CD4-positive, alpha-beta memory T cell (primary cell): ENCODE measurements at regions of chr5 and their contacts with region 1.

Region 1: DNA sequence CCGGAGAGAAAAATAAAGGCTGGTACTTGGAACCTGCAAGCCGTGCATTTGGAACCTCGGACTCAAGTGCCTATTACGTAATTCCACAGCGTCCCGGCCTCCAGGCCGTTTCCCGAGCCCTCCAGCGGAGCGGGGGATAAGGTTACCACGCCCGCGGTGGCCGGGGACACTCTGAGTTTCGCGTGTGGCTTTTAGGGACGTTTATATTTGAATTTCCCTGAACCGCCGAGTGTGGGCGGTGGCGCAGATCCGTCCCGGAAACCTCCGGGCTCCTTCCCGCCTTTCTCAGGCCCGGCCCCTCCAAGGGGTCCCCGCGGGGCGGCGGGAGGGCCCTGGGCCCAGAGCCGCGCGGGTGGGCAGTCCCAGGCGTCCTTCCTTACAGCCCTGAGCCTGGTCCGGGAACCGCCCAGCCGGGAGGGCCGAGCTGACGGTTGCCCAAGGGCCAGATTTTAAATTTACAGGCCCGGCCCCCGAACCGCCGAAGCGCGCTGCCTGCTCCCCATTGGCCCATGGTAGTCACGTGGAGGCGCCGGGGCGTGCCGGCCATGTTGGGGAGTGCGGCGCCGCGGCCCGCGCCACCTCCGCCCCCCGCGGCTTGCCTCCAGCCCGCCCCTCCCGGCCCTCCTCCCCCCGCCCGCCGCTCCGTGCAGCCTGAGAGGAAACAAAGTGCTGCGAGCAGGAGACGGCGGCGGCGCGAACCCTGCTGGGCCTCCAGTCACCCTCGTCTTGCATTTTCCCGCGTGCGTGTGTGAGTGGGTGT is at the start of gene LMNB1:
- DNase-seq: peak; percentile 92 to 98 (median 94)
- H3K4me3 ChIP-seq: peak within 1 kb of the TSS; percentile 78 to 94
- H3K4me3 Mint-ChIP-seq: peak within 1 kb of the TSS; percentile 88 to 98 (median 95)
- H3K27ac ChIP-seq: peak within 1 kb of the TSS; percentile 85
- H3K27ac Mint-ChIP-seq: peak within 1 kb of the TSS; percentile 86 to 99 (median 95)
- H3K4me1 ChIP-seq: peaks cover 37% of the 10 kb centered on the region
- H3K4me1 Mint-ChIP-seq: peaks cover 16 to 35% (median 25%) of the 10 kb centered on the region in 4 donors
- H3K27me3 ChIP-seq: no peaks in the 10 kb centered on the region
- H3K27me3 Mint-ChIP-seq: no peaks in the 10 kb centered on the region
- total RNA-seq, gene LMNB1: 28.2 to 32.3 TPM

Region 2: GRCh38 chr5:126422989-126423788 is 353.5 kb before region 1 on chr5 and contains the start of gene GRAMD2B:
- CTCF ChIA-PET with region 1: no interaction called
- POLR2A ChIA-PET with region 1: interaction called, 7 read pairs
- intact Hi-C with region 1: loop called (anchors 5 kb)
- DNase-seq: peak; percentile 70 to 82 (median 75)
- H3K4me3 ChIP-seq: peak within 1 kb of the TSS; percentile 70 to 79
- H3K4me3 Mint-ChIP-seq: peak within 1 kb of the TSS; percentile 90 to 95 (median 92)
- H3K27ac ChIP-seq: peak within 1 kb of the TSS; percentile 87
- H3K27ac Mint-ChIP-seq: peak within 1 kb of the TSS; percentile 87 to 95 (median 94)
- H3K4me1 ChIP-seq: peaks cover 22% of the 10 kb centered on the region
- H3K4me1 Mint-ChIP-seq: peaks cover 20 to 40% (median 27%) of the 10 kb centered on the region in 4 donors
- H3K27me3 ChIP-seq: no peaks in the 10 kb centered on the region
- H3K27me3 Mint-ChIP-seq: no peaks in the 10 kb centered on the region
- total RNA-seq, gene GRAMD2B: 4.8 to 6.1 TPM

Region 3: GRCh38 chr5:126676195-126676624 is 100.5 kb before region 1 on chr5:
- CTCF ChIA-PET with region 1: interaction called, 319 read pairs
- POLR2A ChIA-PET with region 1: interaction called, 72 read pairs
- intact Hi-C with region 1: loop called (anchors 1 kb)
- DNase-seq: peak; percentile 65 to 74 (median 72)
- H3K4me3 ChIP-seq: no peak overlapping the region
- H3K4me3 Mint-ChIP-seq: no peak overlapping the region
- H3K27ac ChIP-seq: no peak overlapping the region
- H3K27ac Mint-ChIP-seq: peak overlapping the region in 2 of 7 donors; percentile 2 to 31
- H3K4me1 ChIP-seq: no peaks in the 10 kb centered on the region
- H3K4me1 Mint-ChIP-seq: peaks cover 3 to 5% (median 4%) of the 10 kb centered on the region in 4 donors
- H3K27me3 ChIP-seq: no peaks in the 10 kb centered on the region
- H3K27me3 Mint-ChIP-seq: no peaks in the 10 kb centered on the region

Region 4: DNA sequence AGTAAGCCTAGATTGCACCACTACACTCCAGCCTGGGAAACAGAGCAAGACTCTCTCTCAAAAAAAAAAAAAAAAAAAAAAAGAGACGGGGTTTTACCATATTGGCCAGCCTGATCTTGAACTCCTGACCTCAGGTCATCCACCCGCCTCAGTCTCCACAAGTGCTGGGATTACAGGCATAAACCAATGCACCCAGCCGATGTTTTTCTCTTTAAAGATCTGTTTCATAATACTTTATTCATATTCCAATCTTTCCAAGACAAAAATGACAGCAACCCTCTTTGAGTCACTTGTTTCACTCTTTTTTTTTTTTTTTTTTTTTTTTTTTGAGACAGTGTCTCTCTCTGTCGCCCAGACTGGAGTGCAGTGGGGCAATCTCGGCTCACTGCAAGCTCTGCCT is 13.3 kb before region 1 on chr5:
- CTCF ChIA-PET with region 1: interaction called, 48 read pairs
- POLR2A ChIA-PET with region 1: interaction called, 52 read pairs
- intact Hi-C with region 1: loop called (anchors 1 kb)
- DNase-seq: no peak
- H3K4me3 ChIP-seq: no peak overlapping the region
- H3K4me3 Mint-ChIP-seq: peak overlapping the region in 3 of 8 donors; percentile 10 to 41 (median 32)
- H3K27ac ChIP-seq: no peak overlapping the region
- H3K27ac Mint-ChIP-seq: no peak overlapping the region
- H3K4me1 ChIP-seq: peaks cover 23% of the 10 kb centered on the region
- H3K4me1 Mint-ChIP-seq: peaks cover 13 to 28% (median 19%) of the 10 kb centered on the region in 4 donors
- H3K27me3 ChIP-seq: no peaks in the 10 kb centered on the region
- H3K27me3 Mint-ChIP-seq: peaks cover 0 to under 1% of the 10 kb centered on the region in 2 donors

Region 5: DNA sequence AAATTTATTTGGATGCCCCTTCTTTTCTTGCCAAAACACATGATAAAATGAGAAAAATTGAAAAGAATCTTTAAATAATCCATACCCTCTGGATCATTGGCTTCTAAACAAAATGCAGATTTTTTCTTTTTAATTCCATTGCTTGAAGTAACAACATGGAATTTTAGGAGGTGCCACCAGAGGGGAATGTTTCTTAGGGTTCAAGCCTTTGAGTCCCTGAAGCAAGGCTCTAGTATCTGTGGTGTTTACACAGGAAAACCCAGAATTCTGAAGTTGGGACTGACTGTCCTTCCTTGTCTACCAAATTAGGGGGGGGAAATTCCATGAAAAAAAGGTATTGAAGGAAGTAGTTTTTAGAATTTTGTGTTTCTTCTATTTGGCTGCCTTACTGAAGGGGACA is 69.7 kb after region 1 on chr5:
- CTCF ChIA-PET with region 1: interaction called, 5 read pairs
- POLR2A ChIA-PET with region 1: interaction called, 39 read pairs
- intact Hi-C with region 1: no loop called
- DNase-seq: no peak
- H3K4me3 ChIP-seq: no peak overlapping the region
- H3K4me3 Mint-ChIP-seq: peak overlapping the region in 1 of 8 donors; percentile 52
- H3K27ac ChIP-seq: no peak overlapping the region
- H3K27ac Mint-ChIP-seq: peak overlapping the region in 5 of 7 donors; percentile 65 to 90 (median 87)
- H3K4me1 ChIP-seq: peaks cover 24% of the 10 kb centered on the region
- H3K4me1 Mint-ChIP-seq: peaks cover 12 to 40% (median 28%) of the 10 kb centered on the region in 4 donors
- H3K27me3 ChIP-seq: no peaks in the 10 kb centered on the region
- H3K27me3 Mint-ChIP-seq: no peaks in the 10 kb centered on the region

Region 6: DNA sequence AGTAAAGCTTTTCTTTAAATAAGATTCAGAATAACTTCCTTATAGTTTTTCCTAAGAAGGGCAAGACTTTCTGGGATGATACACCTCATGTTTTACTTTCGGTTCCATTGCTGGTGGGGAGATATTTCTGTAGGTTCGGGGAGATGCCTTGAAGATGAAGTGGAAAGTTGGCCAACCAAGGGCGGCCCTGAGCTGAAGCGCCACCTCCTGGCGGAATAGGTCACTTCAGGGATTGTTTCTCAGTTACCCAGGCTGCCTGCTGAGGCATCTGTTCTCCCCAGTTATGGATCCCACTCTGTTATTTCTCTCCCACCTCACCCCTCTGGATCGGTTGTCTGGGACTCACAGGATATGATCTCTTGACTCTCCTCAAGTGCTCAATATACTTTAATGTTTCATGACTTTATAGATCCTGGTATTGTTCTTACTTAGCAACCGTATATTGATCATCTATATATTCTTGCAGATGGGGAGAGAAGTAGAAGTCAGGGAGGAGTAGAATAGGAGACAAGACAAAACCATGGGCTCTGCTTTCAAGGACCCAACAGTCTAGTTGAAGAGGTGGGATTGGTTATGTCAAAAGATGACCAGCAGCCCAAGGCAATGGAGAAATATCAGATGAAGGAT is 537.3 kb after region 1 on chr5:
- CTCF ChIA-PET with region 1: interaction called, 4 read pairs
- POLR2A ChIA-PET with region 1: no interaction called
- intact Hi-C with region 1: loop called (anchors 5 kb)
- DNase-seq: peak in 4 of 5 donors; percentile 38 to 55 (median 54)
- H3K4me3 ChIP-seq: no peak overlapping the region
- H3K4me3 Mint-ChIP-seq: peak overlapping the region in 1 of 8 donors; percentile 50
- H3K27ac ChIP-seq: no peak overlapping the region
- H3K27ac Mint-ChIP-seq: peak overlapping the region in 1 of 7 donors; percentile 81
- H3K4me1 ChIP-seq: no peaks in the 10 kb centered on the region
- H3K4me1 Mint-ChIP-seq: peaks cover 0 to 4% (median under 1%) of the 10 kb centered on the region in 4 donors
- H3K27me3 ChIP-seq: no peaks in the 10 kb centered on the region
- H3K27me3 Mint-ChIP-seq: peaks cover 5 to 9% of the 10 kb centered on the region in 2 donors